ENCODE measurements at regions of chr3 and their contacts with region 1.

Region 1: DNA sequence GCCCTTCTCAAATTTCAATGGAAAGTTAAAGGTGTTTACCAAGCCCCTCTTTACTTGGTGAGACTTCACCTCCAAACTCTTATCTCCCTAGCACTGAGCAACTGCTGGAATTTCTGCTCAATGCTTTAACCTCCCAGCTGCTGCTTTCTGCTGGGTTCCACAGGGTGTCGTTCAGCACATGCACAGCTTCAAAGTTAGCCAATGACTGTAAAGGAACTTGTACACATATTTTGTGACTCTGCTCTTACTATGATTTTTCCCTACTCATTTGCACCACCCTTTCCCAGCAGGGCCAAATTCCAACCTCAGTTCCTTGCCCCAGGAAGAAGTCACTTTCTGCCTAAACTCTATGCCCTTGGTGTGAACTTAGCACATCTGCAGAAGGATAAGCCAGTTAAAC is 89.7 kb downstream of the ULK4 start:
- DNase-seq: no peak
- ATAC-seq: no peak
- H3K4me3 ChIP-seq: no peak overlapping the region
- H3K27ac ChIP-seq: no peak overlapping the region
- H3K4me1 ChIP-seq: no peaks in the 10 kb centered on the region
- H3K27me3 ChIP-seq: no peaks in the 10 kb centered on the region
- CTCF ChIP-seq: no peak

Region 2: DNA sequence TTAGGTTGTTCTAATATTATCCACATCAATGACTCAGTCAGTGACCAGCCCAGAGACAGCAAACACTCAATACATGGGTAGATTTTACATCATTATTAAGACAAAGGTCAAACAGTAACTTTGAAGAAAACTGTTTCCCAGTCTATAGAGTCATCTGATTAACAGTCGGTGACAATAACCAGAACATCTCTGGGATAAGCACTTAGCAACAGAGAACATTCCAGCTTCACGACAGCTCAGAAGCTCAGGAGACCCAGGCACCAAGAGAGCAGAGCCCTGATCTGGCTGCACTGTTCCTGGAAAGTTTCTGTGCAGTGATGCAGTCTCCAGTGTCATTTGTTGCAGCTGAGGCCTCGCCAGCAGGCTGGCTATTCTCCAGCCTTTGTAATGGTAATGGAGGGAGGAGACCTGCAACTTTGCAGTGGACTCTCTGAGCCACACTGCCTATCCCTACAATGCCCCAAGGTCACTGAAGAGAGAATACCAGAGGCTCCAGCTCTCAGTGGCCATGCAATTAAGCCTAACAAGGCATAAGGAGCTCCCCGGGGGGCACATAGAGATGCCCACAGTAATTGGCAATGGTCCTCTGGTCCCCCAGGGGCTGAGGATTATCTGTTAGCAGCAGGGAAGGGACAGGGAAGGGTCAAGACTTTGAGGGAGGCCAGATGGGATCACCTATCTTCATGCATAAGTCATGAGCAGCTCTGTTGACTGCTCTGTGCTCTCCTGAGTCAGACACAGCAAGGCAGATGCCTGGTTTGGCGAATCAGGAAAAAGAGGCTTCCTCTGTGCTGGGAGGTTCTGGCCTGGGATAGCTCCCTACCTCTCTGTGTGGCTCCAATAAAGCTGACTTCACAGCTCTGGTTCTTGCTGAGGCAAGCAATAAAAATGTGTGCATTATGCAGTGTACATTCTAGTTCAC is 509.3 kb before region 1 on chr3:
- CTCF ChIA-PET with region 1: no interaction called
- POLR2A ChIA-PET with region 1: no interaction called
- intact Hi-C with region 1: loop called (anchors 10 kb)
- DNase-seq: no peak
- ATAC-seq: peak; percentile 70
- H3K4me3 ChIP-seq: no peak overlapping the region
- H3K27ac ChIP-seq: no peak overlapping the region
- H3K4me1 ChIP-seq: peaks cover 11% of the 10 kb centered on the region
- H3K27me3 ChIP-seq: no peaks in the 10 kb centered on the region
- CTCF ChIP-seq: no peak

Region 3: GRCh38 chr3:41792806-41793205 is 79.4 kb before region 1 on chr3:
- CTCF ChIA-PET with region 1: no interaction called
- POLR2A ChIA-PET with region 1: no interaction called
- intact Hi-C with region 1: no loop called
- DNase-seq: no peak
- ATAC-seq: no peak
- H3K4me3 ChIP-seq: no peak overlapping the region
- H3K27ac ChIP-seq: no peak overlapping the region
- H3K4me1 ChIP-seq: no peaks in the 10 kb centered on the region
- H3K27me3 ChIP-seq: no peaks in the 10 kb centered on the region
- CTCF ChIP-seq: no peak

Region 4: GRCh38 chr3:41960826-41961749 is 88.9 kb after region 1 on chr3:
- CTCF ChIA-PET with region 1: no interaction called
- POLR2A ChIA-PET with region 1: no interaction called
- intact Hi-C with region 1: no loop called
- DNase-seq: peak; percentile 63
- ATAC-seq: peak; percentile 35
- H3K4me3 ChIP-seq: peak overlapping the region; percentile 87
- H3K27ac ChIP-seq: peak overlapping the region; percentile 4; the same call in 1 of the 2 replicates
- H3K4me1 ChIP-seq: peaks cover 6% of the 10 kb centered on the region; the same call in 1 of the 2 replicates
- H3K27me3 ChIP-seq: no peaks in the 10 kb centered on the region
- CTCF ChIP-seq: no peak

Region 5: DNA sequence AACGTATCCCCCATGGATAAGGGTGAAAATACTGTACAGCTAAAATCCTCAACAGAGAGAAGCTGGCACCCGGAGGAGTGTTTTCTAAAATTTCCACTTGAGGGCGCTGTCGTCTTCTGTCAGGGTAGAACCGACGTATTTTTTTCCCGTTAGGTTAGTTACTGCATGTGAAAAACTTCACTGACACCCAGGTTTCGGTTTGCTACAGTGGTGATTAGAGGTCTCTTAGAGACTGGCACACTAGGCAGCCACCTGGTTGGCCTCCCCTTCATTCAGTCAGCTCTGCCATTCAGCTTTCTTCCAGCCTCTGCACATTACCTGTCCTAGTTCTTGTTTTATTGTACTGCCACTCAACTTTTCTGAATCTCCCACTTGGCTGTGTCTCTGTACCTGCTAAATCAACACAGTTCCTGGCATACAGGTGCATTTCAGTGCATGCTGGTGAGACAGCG is 375.4 kb after region 1 on chr3:
- CTCF ChIA-PET with region 1: interaction called, 10 read pairs
- POLR2A ChIA-PET with region 1: no interaction called
- intact Hi-C with region 1: no loop called
- DNase-seq: peak; percentile 88
- ATAC-seq: peak; percentile 77
- H3K4me3 ChIP-seq: no peak overlapping the region
- H3K27ac ChIP-seq: no peak overlapping the region
- H3K4me1 ChIP-seq: no peaks in the 10 kb centered on the region
- H3K27me3 ChIP-seq: peaks cover 8% of the 10 kb centered on the region
- CTCF ChIP-seq: peak; percentile 96

Measured in PC-3 (cell line).